ENCODE measurements at regions of chr4 and their contacts with region 1.

Region 1: DNA sequence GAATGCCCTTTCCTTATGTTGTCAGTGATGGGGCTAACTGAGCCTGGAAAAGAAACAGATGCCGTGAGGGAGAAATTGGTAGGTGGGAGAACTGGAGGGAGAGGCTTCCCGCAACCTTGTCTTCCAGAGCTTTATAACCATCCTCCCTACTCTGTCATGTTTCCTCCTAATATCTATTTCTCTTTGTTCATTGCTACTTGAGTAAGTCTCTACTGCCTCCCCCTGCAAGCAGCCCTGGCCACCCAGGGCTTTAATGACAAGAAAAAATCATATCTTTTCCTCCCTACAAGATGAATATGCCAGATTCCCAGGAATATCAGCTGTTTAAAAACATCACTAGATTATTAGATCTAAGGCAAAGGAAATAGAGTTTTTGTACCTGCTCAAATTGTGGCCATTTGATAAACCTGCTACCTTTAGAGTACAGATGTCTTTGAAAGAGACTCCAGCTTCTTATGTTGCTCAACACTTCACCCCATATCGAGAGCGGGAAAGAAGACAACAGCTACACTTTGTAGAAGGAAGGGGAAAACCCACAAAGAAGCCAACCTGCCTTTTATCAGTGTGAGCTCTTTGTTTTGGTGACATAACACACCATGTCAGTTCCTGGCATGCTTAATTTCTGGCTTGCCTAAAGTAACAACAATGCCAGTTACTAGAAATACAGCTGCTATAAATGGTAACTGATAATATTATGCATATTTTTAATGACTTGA is 186.6 kb upstream of the LEF1 start:
- DNase-seq: peak; percentile 76
- H3K4me3 Mint-ChIP-seq: peak overlapping the region; percentile 62
- H3K27ac Mint-ChIP-seq: peak overlapping the region; percentile 88
- H3K4me1 Mint-ChIP-seq: peaks cover 61% of the 10 kb centered on the region
- H3K27me3 Mint-ChIP-seq: no peaks in the 10 kb centered on the region

Region 2: GRCh38 chr4:108118490-108118889 is 236.9 kb before region 1 on chr4:
- CTCF ChIA-PET with region 1: no interaction called
- intact Hi-C with region 1: loop called (anchors 2 kb)
- DNase-seq: peak; percentile 58
- H3K4me3 Mint-ChIP-seq: peak overlapping the region; percentile 50
- H3K27ac Mint-ChIP-seq: peak overlapping the region; percentile 96
- H3K4me1 Mint-ChIP-seq: peaks cover 93% of the 10 kb centered on the region
- H3K27me3 Mint-ChIP-seq: no peaks in the 10 kb centered on the region

Region 3: DNA sequence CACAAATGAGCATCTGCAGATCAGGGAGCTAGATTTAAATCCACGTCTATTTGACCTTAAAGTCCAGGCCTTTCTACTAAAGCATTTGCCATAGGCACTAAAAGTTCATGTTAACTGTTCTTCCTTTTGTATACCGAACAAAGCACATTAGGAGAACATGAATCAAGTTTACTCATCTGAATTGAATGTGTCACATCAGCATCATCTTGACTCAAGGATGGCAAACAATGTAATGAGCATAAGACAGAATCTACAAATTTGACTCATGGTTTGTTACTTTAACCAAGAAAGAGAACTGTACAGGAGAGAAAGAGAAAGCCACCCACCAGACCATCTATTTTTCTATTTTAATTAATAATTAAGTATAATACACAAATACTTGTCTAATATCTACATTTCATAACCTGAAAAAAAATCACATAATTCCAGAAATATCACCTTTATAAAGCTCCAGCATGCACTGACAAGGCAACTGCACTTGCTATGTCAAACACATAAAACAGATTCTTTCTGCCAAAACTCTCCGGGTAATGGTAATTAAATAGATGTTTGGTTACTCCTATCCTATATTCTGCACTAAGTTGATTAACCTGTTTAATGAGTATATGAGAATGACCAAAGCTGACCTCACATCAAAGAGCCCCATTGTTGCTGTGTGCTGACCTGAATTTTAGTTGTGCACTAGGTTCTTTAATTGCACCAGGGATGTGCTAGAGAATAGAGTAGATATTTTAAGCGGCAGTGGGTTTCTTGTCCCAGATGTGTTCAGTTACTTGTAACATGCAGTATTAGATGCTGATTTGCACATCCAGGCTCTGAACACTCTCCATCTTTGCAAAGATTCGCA is 144.1 kb before region 1 on chr4:
- CTCF ChIA-PET with region 1: no interaction called
- intact Hi-C with region 1: loop called (anchors 2 kb)
- DNase-seq: no peak
- H3K4me3 Mint-ChIP-seq: no peak overlapping the region
- H3K27ac Mint-ChIP-seq: no peak overlapping the region
- H3K4me1 Mint-ChIP-seq: peaks cover 44% of the 10 kb centered on the region
- H3K27me3 Mint-ChIP-seq: no peaks in the 10 kb centered on the region

Region 4: DNA sequence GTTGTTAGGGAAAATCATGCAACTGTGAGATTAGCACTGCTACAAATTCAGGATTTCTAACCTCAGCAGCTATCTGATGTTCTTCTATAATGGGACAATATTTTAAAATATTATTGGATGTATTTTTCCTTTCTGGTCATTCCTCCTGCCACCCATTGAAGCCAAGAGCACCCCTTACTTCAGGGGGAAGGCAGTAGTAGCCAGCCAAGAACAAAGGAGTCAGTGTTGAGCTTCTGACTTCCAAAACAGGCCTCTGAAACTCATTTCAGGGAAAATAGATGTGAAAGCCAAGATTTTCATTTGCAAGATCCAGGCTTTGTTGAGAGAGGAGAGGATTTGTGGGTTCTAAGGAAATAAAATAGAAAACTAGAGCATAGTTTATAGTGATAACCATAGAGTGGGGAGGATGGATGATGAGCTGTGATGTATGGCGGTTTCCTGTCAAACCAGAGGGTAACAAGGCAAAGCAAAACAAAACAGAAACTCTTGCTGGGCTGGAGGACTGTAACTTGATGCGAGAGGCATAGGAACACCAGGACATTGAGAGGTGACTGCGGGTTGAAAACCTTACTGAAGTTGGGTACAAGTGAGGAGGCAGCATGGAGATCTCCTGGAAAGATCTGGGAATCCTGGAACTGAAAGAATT is 12.9 kb before region 1 on chr4:
- CTCF ChIA-PET with region 1: interaction called, 4 read pairs
- intact Hi-C with region 1: loop called (anchors 1 kb)
- DNase-seq: peak; percentile 66
- H3K4me3 Mint-ChIP-seq: peak overlapping the region; percentile 59
- H3K27ac Mint-ChIP-seq: peak overlapping the region; percentile 82
- H3K4me1 Mint-ChIP-seq: peaks cover 41% of the 10 kb centered on the region
- H3K27me3 Mint-ChIP-seq: no peaks in the 10 kb centered on the region

Region 5: DNA sequence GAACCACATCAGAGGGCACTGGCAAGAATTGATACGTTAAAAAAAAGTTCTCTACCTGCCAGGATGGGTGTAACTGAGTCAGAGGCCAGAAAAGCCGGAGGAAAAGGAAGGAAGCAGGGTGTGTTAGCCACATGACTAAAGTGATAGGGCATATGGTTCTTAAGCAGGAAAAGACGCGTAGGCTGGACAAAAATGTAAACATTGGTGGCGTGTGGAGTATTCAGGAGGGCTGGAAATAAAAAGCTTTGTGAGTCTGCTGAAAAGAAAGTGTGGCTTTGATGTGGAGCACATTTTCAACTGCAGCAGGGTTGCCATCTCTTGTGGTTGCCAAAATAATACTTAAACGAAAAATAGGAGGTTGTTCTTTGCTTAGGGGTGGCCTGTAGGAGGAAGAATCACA is 78.5 kb after region 1 on chr4:
- CTCF ChIA-PET with region 1: no interaction called
- intact Hi-C with region 1: loop called (anchors 1 kb)
- DNase-seq: peak; percentile 57
- H3K4me3 Mint-ChIP-seq: peak overlapping the region; percentile 32
- H3K27ac Mint-ChIP-seq: peak overlapping the region; percentile 70
- H3K4me1 Mint-ChIP-seq: peaks cover 44% of the 10 kb centered on the region
- H3K27me3 Mint-ChIP-seq: no peaks in the 10 kb centered on the region

Region 6: DNA sequence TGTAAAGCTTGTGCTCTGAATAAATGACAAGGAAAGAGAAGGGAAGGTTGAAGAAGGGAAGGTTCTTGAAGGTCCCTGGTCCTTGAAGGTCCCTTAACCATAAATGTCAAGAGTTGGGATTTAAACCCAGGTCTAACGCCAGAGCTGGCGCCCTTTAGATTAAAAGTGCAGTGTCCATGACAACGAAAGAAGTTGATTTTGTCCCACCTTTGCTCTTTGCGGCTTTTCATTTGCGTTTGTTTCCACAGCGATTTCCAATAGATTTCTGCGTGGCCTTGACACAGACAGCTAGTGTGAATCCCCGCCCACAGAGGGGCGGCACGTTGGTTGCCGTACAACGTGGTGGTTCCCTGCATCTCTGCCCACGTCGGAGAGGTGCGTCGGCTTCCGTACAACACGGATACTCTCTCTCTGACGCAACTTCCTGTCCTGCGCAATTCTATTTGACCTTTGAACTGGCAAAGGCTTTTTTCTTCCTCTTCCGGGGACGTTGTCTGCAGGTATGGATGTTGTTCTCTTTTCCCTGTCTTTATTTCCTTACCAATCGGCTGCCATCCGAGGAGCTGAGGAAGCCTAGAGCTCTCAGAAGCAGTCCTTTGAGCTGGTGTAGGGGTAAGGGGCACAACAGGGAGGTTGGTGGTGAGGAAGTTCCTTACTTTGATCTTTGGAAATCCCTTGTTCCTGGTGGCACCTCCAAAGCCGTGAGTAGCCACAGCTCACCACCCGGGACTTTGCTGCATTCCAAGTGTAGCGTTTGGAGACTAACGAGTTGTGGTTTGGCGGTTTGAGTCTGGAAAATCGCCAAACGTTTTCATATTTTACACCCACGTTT is 265.0 kb after region 1 on chr4 and contains the start of gene RPL34:
- CTCF ChIA-PET with region 1: no interaction called
- intact Hi-C with region 1: loop called (anchors 5 kb)
- DNase-seq: peak; percentile 99
- H3K4me3 Mint-ChIP-seq: peak within 1 kb of the TSS; percentile 93
- H3K27ac Mint-ChIP-seq: peak within 1 kb of the TSS; percentile 95
- H3K4me1 Mint-ChIP-seq: peaks cover 45% of the 10 kb centered on the region
- H3K27me3 Mint-ChIP-seq: no peaks in the 10 kb centered on the region
- total RNA-seq, gene RPL34: 1,983 to 2,004 TPM

Measured in activated naive CD4-positive, alpha-beta T cell treated with anti-CD3 and anti-CD28 coated beads for 36 hours (primary cell).